Gastrocnemius medialis (tissue), 4 donors: ENCODE measurements at regions of chr22 and their contacts with region 1.

Region 1: DNA sequence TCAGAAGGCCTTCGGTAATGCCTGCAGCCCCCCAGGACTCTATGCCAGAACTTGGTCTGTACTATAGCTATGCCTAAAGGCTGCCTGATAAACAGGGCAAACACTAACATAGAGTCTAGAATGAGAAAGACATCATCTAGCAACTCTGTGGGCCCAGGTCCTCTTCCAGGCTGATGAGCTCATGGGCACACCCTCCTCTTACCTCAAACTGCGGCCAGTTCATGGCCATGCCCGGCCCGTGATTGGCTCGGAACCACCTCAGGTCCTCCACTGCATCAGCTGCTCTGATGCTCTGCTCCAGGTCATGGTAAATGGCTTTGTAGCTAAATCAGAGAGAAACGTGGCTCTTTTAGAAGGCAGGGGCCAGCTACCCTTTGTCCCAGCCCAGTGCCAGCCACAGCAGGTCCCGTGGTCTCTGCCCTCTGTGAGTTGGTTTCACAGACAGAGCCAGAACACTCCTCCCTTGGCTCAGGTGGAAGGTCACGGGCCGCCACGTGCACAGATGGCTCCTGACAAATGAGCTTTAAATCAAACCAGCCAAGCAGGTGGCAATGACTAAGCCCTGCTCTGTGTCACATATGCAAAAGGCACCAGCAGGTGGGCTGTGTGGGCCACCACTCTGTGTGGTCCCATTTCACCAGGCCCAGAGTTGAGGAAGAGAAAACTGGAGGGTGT is 25.0 kb upstream of the ARFGAP3 start:
- DNase-seq: peak; percentile 89 to 96
- ATAC-seq: peak; percentile 86 to 90
- H3K4me3 ChIP-seq: peak overlapping the region in 3 of 4 donors; percentile 7 to 21 (median 10)
- H3K27ac ChIP-seq: peak overlapping the region; percentile 78 to 92 (median 84)
- H3K4me1 ChIP-seq: peaks cover 27 to 61% of the 10 kb centered on the region in 2 donors
- H3K27me3 ChIP-seq: no peaks in the 10 kb centered on the region
- CTCF ChIP-seq: peak in 2 of 5 experiments; percentile 13 to 34
- POLR2A ChIP-seq: peak; percentile 69 to 83

Region 2: GRCh38 chr22:42892571-42893316 is 10.6 kb after region 1 on chr22:
- in situ Hi-C with region 1: no loop called
- intact Hi-C with region 1: loop called (anchors 1 kb)
- DNase-seq: peak; percentile 73 to 77
- ATAC-seq: peak; percentile 83 to 86
- H3K4me3 ChIP-seq: no peak overlapping the region
- H3K27ac ChIP-seq: peak overlapping the region; percentile 80 to 87 (median 83)
- H3K4me1 ChIP-seq: peaks cover 46 to 54% of the 10 kb centered on the region in 2 donors
- H3K27me3 ChIP-seq: no peaks in the 10 kb centered on the region
- CTCF ChIP-seq: no peak
- POLR2A ChIP-seq: peak; percentile 20 to 49

Region 3: DNA sequence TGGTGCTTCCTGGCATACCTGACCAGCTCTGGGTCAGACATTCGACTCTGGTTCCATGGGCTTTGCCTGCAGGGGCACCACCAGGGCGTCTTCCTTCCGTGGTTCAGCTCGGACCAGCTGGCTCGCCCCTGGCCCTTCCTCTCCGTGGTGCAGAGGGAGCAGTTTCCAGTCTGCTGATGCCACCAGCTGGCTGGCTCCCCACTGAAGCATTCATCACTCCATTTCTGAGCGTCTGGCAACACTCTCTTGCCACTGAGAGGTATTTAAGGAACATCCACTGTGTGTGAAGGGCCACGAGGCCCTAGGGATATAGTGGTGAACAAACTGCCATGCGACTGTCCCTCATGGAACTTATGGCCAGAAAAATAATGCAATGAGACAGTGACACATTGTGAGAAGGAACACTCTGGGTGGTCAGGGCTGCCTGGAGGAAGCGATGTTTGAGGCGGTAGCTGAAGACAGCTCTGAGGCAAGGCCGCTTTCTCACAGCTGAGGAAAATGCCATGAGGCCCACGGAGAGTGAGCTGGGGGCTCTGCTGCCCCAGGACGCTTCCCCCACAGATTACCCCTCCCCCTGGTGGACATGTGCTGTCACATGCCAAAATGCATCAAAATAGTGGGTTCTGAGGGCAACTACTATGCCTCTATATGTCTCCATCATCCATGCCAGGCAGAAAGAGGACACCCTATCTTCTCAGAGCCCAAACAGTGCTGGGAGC is 19.8 kb after region 1 on chr22:
- in situ Hi-C with region 1: no loop called
- intact Hi-C with region 1: loop called (anchors 1 kb)
- DNase-seq: peak; percentile 74 to 85
- ATAC-seq: peak; percentile 64 to 81
- H3K4me3 ChIP-seq: no peak overlapping the region
- H3K27ac ChIP-seq: peak overlapping the region; percentile 87 to 94 (median 89)
- H3K4me1 ChIP-seq: peaks cover 58 to 66% of the 10 kb centered on the region in 2 donors
- H3K27me3 ChIP-seq: no peaks in the 10 kb centered on the region
- CTCF ChIP-seq: peak in 3 of 5 experiments; percentile 15 to 42 (median 40)
- POLR2A ChIP-seq: no peak

Region 4: DNA sequence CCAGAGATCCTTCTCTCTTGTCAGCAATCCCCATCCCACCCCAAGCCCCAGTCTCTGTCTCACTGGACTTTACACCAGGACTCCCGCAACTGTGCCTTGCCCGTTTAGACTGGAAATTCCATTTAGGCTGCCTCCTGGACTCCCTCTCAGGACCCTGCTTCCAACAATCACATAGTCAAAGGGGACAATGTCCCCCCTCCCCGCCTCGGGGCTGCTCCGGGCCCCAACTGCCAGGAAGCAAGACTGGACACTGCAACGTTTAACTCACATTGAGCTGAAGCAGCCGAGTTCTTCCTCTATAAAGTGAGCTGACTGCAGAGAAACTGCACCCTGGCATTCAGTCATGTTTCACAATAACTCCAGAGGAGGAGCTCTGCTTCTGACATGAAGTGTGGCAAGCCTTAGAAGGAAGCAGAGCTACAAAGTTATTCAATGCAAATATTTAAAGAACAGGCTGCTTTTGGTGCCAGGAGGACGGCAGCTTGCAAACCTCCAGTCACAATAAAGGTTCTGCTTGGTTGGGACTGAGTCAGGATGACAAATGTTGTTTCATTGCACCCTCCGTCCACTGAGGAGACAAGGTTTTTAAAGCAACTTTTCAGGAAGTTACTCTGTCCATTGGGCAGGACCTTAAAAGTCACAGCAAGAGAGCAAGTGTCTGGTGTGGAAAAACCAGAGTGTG is 112.9 kb after region 1 on chr22:
- in situ Hi-C with region 1: no loop called
- intact Hi-C with region 1: no loop called
- DNase-seq: peak; percentile 55 to 64
- ATAC-seq: peak; percentile 79 to 89
- H3K4me3 ChIP-seq: peak overlapping the region in 2 of 4 donors; percentile 5 to 26
- H3K27ac ChIP-seq: peak overlapping the region; percentile 39 to 71 (median 55)
- H3K4me1 ChIP-seq: peaks cover 48 to 63% of the 10 kb centered on the region in 2 donors
- H3K27me3 ChIP-seq: no peaks in the 10 kb centered on the region
- CTCF ChIP-seq: no peak
- POLR2A ChIP-seq: no peak